Activated B cell treated with CpG ODN at 0.5 μM for 24 hours (primary cell): ENCODE measurements at regions of chr10 and their contacts with region 1.

Region 1: GRCh38 chr10:19909025-19909696 is 92.9 kb downstream of the PLXDC2 start:
- DNase-seq: no peak
- ATAC-seq: no peak
- H3K4me3 Mint-ChIP-seq: no peak overlapping the region
- H3K27ac Mint-ChIP-seq: no peak overlapping the region
- H3K4me1 Mint-ChIP-seq: no peaks in the 10 kb centered on the region
- H3K27me3 Mint-ChIP-seq: no peaks in the 10 kb centered on the region
- CTCF ChIP-seq: no peak

Region 2: DNA sequence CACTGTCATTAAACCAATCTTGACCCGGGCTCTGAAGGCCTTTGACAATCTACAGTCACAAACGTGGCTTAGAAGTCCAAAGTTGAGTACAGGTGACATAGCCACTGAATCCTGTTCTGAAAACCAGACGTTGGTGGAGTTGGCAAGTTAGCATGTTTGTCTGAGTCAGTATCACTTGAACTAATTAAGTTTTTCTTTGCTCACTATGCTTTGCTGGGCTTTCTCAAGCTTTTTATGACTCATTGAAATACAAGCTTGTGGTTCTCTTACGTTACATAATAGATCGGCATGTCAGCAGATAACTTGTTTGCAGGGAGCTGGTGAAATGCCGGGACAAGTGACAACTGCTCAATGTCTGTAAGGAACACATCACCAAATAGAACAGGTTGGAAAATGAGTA is 1196.1 kb before region 1 on chr10:
- CTCF ChIA-PET with region 1: no interaction called
- POLR2A ChIA-PET with region 1: no interaction called
- intact Hi-C with region 1: no loop called
- DNase-seq: no peak
- ATAC-seq: no peak
- H3K4me3 Mint-ChIP-seq: no peak overlapping the region
- H3K27ac Mint-ChIP-seq: no peak overlapping the region
- H3K4me1 Mint-ChIP-seq: no peaks in the 10 kb centered on the region
- H3K27me3 Mint-ChIP-seq: no peaks in the 10 kb centered on the region
- CTCF ChIP-seq: no peak

Region 3: GRCh38 chr10:20748551-20748950 is 839.4 kb after region 1 on chr10:
- CTCF ChIA-PET with region 1: no interaction called
- POLR2A ChIA-PET with region 1: interaction called, 13 read pairs
- intact Hi-C with region 1: no loop called
- DNase-seq: no peak
- ATAC-seq: no peak
- H3K4me3 Mint-ChIP-seq: no peak overlapping the region
- H3K27ac Mint-ChIP-seq: no peak overlapping the region
- H3K4me1 Mint-ChIP-seq: no peaks in the 10 kb centered on the region
- H3K27me3 Mint-ChIP-seq: no peaks in the 10 kb centered on the region
- CTCF ChIP-seq: no peak